ENCODE measurements at regions of chr10 and their contacts with region 1.

Region 1: GRCh38 chr10:17062955-17063484 is 66.6 kb downstream of the CUBN start:
- DNase-seq: peak; percentile 82
- H3K4me3 Mint-ChIP-seq: peak overlapping the region; percentile 54
- H3K27ac Mint-ChIP-seq: peak overlapping the region; percentile 86
- H3K4me1 Mint-ChIP-seq: peaks cover 84% of the 10 kb centered on the region
- H3K27me3 Mint-ChIP-seq: no peaks in the 10 kb centered on the region
- CTCF ChIP-seq: no peak

Region 2: DNA sequence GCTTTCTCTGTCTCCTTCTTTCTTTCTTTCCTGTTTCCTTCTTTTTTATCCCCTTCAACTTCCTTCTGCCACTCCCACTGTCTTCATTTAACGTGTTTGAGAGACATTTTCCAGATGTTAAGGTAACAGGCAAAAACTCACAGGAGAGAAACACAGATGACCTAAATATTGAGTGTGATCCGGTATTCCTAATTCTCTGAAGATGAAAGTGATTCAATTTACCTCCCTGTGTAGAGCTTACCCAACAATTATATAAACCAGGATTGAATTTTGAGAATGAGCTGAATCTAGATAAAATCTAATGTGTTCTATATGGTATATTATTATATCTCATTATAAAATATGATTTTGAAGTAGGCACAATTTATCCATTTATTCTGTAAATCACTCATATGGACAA is 199.3 kb before region 1 on chr10:
- CTCF ChIA-PET with region 1: no interaction called
- intact Hi-C with region 1: loop called (anchors 5 kb)
- DNase-seq: no peak
- H3K4me3 Mint-ChIP-seq: no peak overlapping the region
- H3K27ac Mint-ChIP-seq: no peak overlapping the region
- H3K4me1 Mint-ChIP-seq: no peaks in the 10 kb centered on the region
- H3K27me3 Mint-ChIP-seq: no peaks in the 10 kb centered on the region
- CTCF ChIP-seq: no peak

Region 3: DNA sequence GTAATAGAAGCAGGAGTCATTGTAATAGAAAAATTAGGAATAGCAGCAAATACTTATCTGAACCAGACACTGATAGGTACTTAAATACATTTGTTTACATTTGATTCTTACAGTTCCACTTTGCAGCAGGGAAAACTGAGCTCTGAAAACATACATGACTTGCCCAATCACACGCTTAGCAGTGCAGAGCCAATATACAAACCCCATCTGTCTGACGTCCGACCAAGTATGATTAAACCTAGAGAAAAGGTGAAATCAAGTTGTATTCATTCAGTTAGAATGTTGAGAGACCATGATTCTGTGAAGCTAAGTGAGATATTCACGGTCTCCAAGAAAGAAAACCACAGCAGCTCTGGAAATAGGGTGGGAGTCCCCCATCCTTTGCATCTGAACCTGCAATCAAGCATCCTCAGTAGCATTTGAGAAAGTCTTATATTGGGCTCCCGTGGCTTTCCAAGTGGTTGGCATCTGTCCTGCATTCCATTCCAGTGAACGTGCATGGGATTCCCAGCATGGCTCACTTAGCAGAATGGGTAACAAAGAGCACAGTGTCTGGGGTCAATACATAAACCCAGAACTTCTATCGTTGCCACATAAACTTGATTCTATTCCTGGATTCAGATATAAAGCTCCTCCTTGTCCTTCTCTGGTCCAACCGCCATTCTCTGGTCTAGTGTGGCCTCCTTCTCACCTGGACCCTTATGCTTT is 97.1 kb before region 1 on chr10:
- CTCF ChIA-PET with region 1: no interaction called
- intact Hi-C with region 1: loop called (anchors 5 kb)
- DNase-seq: peak; percentile 77
- H3K4me3 Mint-ChIP-seq: no peak overlapping the region
- H3K27ac Mint-ChIP-seq: peak overlapping the region; percentile 54
- H3K4me1 Mint-ChIP-seq: peaks cover 44% of the 10 kb centered on the region
- H3K27me3 Mint-ChIP-seq: no peaks in the 10 kb centered on the region
- CTCF ChIP-seq: no peak

Region 4: DNA sequence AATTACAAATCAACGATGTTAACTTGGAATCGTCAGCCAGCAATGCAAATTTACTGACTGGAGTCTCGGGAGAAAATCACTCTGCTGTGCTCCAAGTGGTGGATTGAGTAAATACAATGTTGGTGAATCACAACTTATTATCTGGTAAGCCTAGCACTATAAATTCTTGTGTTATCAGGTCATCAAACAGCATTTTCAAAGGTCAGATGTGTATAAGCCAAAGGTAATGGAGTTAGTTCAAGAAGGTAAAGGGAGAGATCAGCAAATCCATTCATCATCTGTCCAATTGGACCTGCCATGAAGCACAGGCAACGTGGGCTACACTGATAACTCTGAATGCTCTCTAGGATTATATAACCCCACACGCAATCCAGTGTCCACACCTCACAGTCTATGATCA is 52.7 kb after region 1 on chr10:
- CTCF ChIA-PET with region 1: interaction called, 3 read pairs
- intact Hi-C with region 1: loop called (anchors 1 kb)
- DNase-seq: peak; percentile 31
- H3K4me3 Mint-ChIP-seq: peak overlapping the region; percentile 61
- H3K27ac Mint-ChIP-seq: peak overlapping the region; percentile 77
- H3K4me1 Mint-ChIP-seq: peaks cover 31% of the 10 kb centered on the region
- H3K27me3 Mint-ChIP-seq: no peaks in the 10 kb centered on the region
- CTCF ChIP-seq: no peak

Region 5: DNA sequence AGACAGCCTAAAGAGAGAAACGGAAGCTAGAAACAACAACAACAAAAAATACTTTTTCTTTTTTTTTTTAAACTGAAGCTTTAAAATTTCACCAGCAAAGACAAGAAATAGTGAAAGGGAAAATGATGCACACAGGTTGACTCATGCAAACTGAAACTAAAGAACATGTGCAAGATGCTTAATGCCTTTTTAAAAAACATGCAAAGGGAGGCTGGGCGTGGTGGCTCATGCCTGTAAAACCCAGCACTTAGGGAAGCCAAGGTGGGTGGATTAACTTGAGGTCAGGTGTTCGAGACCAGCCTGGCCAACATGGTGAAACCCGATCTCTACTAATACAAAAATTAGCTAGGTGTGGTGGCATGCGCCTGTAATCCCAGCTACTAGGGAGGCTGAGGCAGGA is 81.7 kb after region 1 on chr10:
- CTCF ChIA-PET with region 1: no interaction called
- intact Hi-C with region 1: no loop called
- DNase-seq: no peak
- H3K4me3 Mint-ChIP-seq: no peak overlapping the region
- H3K27ac Mint-ChIP-seq: no peak overlapping the region
- H3K4me1 Mint-ChIP-seq: peaks cover 7% of the 10 kb centered on the region
- H3K27me3 Mint-ChIP-seq: no peaks in the 10 kb centered on the region
- CTCF ChIP-seq: no peak

Region 6: DNA sequence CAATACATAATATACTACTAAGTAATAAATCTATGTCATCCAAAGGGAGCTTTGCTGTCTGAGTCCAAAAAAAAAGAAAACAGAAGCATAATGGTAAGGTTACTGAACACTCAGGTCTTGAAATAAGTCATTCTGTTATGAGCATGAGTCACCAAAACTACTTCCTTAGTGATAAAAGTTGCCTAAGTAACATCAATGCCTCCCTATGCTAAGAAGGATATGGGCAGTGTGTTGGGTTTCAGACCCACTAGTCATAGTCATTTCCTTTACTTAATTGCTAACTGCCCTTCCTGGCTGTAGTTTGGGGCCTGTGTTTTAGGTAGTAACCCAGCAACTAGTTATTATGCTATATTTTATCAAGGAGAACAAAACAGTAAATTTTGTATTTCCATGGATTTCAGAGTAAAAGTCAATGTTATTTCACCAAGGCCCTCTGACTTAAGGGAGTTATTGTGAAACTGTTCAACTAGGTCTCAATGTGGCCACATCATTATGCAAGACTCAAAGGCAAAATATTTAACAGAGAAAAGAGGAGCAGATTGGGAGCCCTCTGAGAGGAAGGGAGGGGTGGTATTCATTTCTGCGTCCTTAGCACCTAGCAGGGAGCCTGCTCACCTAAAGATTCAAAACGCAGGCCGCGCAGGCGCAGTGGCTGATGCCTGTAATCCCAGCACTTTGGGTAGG is 153.3 kb after region 1 on chr10:
- CTCF ChIA-PET with region 1: no interaction called
- intact Hi-C with region 1: loop called (anchors 5 kb)
- DNase-seq: peak; percentile 58
- H3K4me3 Mint-ChIP-seq: peak overlapping the region; percentile 26
- H3K27ac Mint-ChIP-seq: peak overlapping the region; percentile 99
- H3K4me1 Mint-ChIP-seq: peaks cover 48% of the 10 kb centered on the region
- H3K27me3 Mint-ChIP-seq: no peaks in the 10 kb centered on the region
- CTCF ChIP-seq: no peak

Region 7: GRCh38 chr10:17228091-17228940 is 165.3 kb after region 1 on chr10 and contains the start of gene VIM:
- CTCF ChIA-PET with region 1: no interaction called
- intact Hi-C with region 1: loop called (anchors 5 kb)
- DNase-seq: peak; percentile 90
- H3K4me3 Mint-ChIP-seq: peak within 1 kb of the TSS; percentile 95
- H3K27ac Mint-ChIP-seq: peak within 1 kb of the TSS; percentile 73
- H3K4me1 Mint-ChIP-seq: peaks cover 9% of the 10 kb centered on the region
- H3K27me3 Mint-ChIP-seq: no peaks in the 10 kb centered on the region
- CTCF ChIP-seq: no peak
- total RNA-seq, gene VIM: 318 and 486 TPM in 2 replicates

Measured in Calu3 (cell line).